HEK293 (cell line): ENCODE measurements at regions of chr3 and their contacts with region 1.

Region 1: DNA sequence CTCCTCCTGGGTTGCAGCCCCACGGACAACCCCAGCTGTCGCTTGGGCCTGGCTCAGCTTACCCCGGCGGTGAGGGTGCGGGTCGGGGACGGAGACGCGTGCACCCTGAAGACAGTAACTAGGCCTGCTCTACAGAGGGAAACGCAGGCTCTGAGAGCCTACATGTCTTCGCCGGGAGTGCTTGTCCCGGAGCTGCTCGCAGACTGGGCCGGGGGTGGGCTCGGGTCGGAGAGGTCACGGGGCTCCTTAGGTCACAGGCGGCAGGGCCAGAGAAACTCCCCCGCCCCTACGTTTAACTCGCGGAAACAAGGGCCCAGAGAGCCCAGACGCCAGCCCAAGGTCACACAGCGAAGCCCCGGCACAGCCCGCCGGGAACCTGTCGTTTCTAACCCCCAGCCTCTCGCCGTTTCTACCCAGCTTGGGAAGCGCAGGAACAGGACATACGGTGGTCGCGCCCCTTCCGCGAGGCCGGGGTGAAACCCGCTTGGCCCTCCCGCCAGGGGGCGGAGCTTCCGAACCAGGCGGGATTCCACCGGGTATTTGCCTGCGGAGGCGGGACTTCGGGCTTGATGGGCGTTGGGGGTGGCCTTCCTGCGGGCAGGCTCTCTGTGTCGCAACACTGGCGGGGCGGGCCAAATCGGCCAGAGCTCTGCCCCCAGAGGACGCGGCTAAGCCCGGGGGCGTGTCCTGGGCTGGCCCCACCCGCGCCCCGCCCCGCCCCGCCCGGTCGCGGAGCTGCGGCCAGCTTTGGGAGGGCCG is at the start of gene HDAC11:
- H3K4me3 ChIP-seq: peak within 1 kb of the TSS; percentile 52
- H3K27ac ChIP-seq: no peak within 1 kb of the TSS; the same call in 1 of the 2 replicates
- H3K4me1 ChIP-seq: peaks cover 3% of the 10 kb centered on the region
- CTCF ChIP-seq: no peak; the same call in 1 of the 2 replicates

Region 2: DNA sequence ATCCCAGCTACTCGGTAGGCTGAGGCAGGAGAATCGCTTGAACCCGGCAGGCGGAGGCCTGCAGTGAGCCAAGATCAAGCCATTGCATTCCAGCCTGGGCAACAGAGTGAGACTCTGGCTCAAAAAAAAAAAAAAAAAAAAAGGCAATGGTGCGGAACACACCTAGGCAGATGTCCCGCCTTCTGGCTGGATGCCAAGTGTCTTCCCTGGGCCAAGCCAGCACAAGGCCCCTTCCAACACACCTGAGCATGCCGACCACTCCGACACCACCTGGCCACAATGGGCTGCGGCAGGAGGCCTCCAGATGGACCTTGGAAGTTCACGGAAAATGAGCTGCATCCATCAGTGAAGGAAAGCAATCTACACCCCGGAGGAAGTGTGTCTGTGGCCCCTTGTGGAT is 78.6 kb before region 1 on chr3:
- CTCF ChIA-PET with region 1: no interaction called
- POLR2A ChIA-PET with region 1: no interaction called
- H3K4me3 ChIP-seq: no peak overlapping the region
- H3K27ac ChIP-seq: no peak overlapping the region
- H3K4me1 ChIP-seq: no peaks in the 10 kb centered on the region
- CTCF ChIP-seq: no peak

Region 3: DNA sequence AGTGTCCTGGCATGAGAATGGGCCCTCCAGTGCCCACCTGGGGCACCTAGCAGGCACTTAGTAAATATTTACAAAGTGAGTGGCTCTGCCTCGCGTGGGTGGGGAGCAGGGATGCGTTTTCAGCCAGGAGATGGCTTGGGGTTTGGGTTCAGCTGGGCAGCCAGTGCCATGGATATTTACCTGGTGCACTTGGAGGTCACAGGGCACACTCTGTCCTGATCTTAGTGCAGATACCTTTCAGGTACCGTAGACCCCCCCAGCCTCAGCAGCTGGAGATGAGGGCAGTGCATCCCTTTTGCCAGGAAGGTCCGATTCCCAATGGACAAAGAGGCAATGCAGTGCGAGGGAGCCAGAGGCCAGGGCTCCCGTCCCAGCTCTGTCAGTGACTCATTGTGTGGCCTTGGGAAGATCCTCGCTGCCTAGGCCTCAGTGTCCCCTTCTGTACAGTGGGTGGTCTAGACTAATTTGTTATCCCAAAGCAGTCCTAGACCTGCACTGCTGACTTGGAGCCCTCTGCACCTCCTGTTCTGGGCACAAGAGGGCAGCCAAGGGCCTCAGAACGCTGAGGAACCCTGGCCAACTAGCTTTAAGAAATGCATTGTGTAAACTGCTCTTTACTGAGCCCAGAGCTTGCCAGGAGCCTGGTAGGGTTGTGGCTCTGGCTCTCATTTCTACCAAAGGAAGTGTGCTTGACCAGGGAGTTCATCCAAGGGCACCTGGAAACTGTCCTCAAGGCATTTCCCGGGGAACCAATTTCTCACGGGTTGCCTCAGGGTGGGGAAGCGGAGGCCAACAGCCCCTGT is 16.4 kb after region 1 on chr3:
- CTCF ChIA-PET with region 1: interaction called, 11 read pairs
- POLR2A ChIA-PET with region 1: interaction called, 4 read pairs
- H3K4me3 ChIP-seq: no peak overlapping the region
- H3K27ac ChIP-seq: no peak overlapping the region
- H3K4me1 ChIP-seq: no peaks in the 10 kb centered on the region
- CTCF ChIP-seq: peak; percentile 83